CD8-positive, alpha-beta memory T cell (primary cell): ENCODE measurements at regions of chr7 and their contacts with region 1.

Region 1: GRCh38 chr7:134646425-134647305 is at the start of gene BPGM:
- DNase-seq: peak; percentile 93 to 99 (median 98)
- H3K4me3 ChIP-seq: peak within 1 kb of the TSS; percentile 81
- H3K4me3 Mint-ChIP-seq: no peak within 1 kb of the TSS
- H3K27ac ChIP-seq: peak within 1 kb of the TSS; percentile 87
- H3K27ac Mint-ChIP-seq: no peak within 1 kb of the TSS
- H3K4me1 ChIP-seq: peaks cover 19% of the 10 kb centered on the region
- H3K4me1 Mint-ChIP-seq: peaks cover 20 to 35% (median 28%) of the 10 kb centered on the region in 3 donors
- H3K27me3 ChIP-seq: no peaks in the 10 kb centered on the region
- H3K27me3 Mint-ChIP-seq: no peaks in the 10 kb centered on the region
- total RNA-seq, gene BPGM: 25.4 to 27.1 TPM

Region 2: GRCh38 chr7:134593530-134594392 is 52.9 kb before region 1 on chr7:
- CTCF ChIA-PET with region 1: no interaction called
- POLR2A ChIA-PET with region 1: no interaction called
- DNase-seq: no peak
- H3K4me3 ChIP-seq: no peak overlapping the region
- H3K4me3 Mint-ChIP-seq: no peak overlapping the region
- H3K27ac ChIP-seq: no peak overlapping the region
- H3K27ac Mint-ChIP-seq: no peak overlapping the region
- H3K4me1 ChIP-seq: no peaks in the 10 kb centered on the region
- H3K4me1 Mint-ChIP-seq: no peaks in the 10 kb centered on the region
- H3K27me3 ChIP-seq: no peaks in the 10 kb centered on the region
- H3K27me3 Mint-ChIP-seq: peaks cover 9 to 15% of the 10 kb centered on the region in 2 donors

Region 3: GRCh38 chr7:134632937-134633540 is 13.6 kb before region 1 on chr7:
- CTCF ChIA-PET with region 1: interaction called, 55 read pairs
- POLR2A ChIA-PET with region 1: interaction called, 7 read pairs
- DNase-seq: peak in 4 of 5 donors; percentile 8 to 63 (median 51)
- H3K4me3 ChIP-seq: no peak overlapping the region
- H3K4me3 Mint-ChIP-seq: no peak overlapping the region
- H3K27ac ChIP-seq: no peak overlapping the region
- H3K27ac Mint-ChIP-seq: no peak overlapping the region
- H3K4me1 ChIP-seq: peaks cover 8% of the 10 kb centered on the region
- H3K4me1 Mint-ChIP-seq: peaks cover 11 to 21% (median 19%) of the 10 kb centered on the region in 3 donors
- H3K27me3 ChIP-seq: no peaks in the 10 kb centered on the region
- H3K27me3 Mint-ChIP-seq: peaks cover 13 to 32% of the 10 kb centered on the region in 2 donors

Region 4: GRCh38 chr7:134660242-134660785 is 13.6 kb after region 1 on chr7:
- CTCF ChIA-PET with region 1: interaction called, 11 read pairs
- POLR2A ChIA-PET with region 1: interaction called, 4 read pairs
- DNase-seq: no peak
- H3K4me3 ChIP-seq: no peak overlapping the region
- H3K4me3 Mint-ChIP-seq: no peak overlapping the region
- H3K27ac ChIP-seq: no peak overlapping the region
- H3K27ac Mint-ChIP-seq: no peak overlapping the region
- H3K4me1 ChIP-seq: no peaks in the 10 kb centered on the region
- H3K4me1 Mint-ChIP-seq: peaks cover 25 to 51% (median 25%) of the 10 kb centered on the region in 3 donors
- H3K27me3 ChIP-seq: no peaks in the 10 kb centered on the region
- H3K27me3 Mint-ChIP-seq: no peaks in the 10 kb centered on the region

Region 5: GRCh38 chr7:134669845-134670373 is 23.2 kb after region 1 on chr7:
- CTCF ChIA-PET with region 1: interaction called, 10 read pairs
- POLR2A ChIA-PET with region 1: interaction called, 7 read pairs
- DNase-seq: peak; percentile 72 to 93 (median 82)
- H3K4me3 ChIP-seq: no peak overlapping the region
- H3K4me3 Mint-ChIP-seq: peak overlapping the region in 6 of 7 donors; percentile 19 to 83 (median 72)
- H3K27ac ChIP-seq: no peak overlapping the region
- H3K27ac Mint-ChIP-seq: peak overlapping the region; percentile 81 to 100 (median 97)
- H3K4me1 ChIP-seq: peaks cover 26% of the 10 kb centered on the region
- H3K4me1 Mint-ChIP-seq: peaks cover 34 to 48% (median 46%) of the 10 kb centered on the region in 3 donors
- H3K27me3 ChIP-seq: no peaks in the 10 kb centered on the region
- H3K27me3 Mint-ChIP-seq: no peaks in the 10 kb centered on the region

Region 6: GRCh38 chr7:134701272-134701671 is 54.6 kb after region 1 on chr7:
- CTCF ChIA-PET with region 1: interaction called, 13 read pairs
- POLR2A ChIA-PET with region 1: interaction called, 5 read pairs
- DNase-seq: peak in 3 of 5 donors; percentile 13 to 51 (median 42)
- H3K4me3 ChIP-seq: no peak overlapping the region
- H3K4me3 Mint-ChIP-seq: no peak overlapping the region
- H3K27ac ChIP-seq: no peak overlapping the region
- H3K27ac Mint-ChIP-seq: peak overlapping the region in 2 of 8 donors; percentile 8 to 61
- H3K4me1 ChIP-seq: no peaks in the 10 kb centered on the region
- H3K4me1 Mint-ChIP-seq: no peaks in the 10 kb centered on the region
- H3K27me3 ChIP-seq: no peaks in the 10 kb centered on the region
- H3K27me3 Mint-ChIP-seq: peaks cover 0 to 16% of the 10 kb centered on the region in 2 donors

Region 7: GRCh38 chr7:134831862-134832261 is 185.2 kb after region 1 on chr7:
- CTCF ChIA-PET with region 1: no interaction called
- POLR2A ChIA-PET with region 1: no interaction called
- DNase-seq: no peak
- H3K4me3 ChIP-seq: no peak overlapping the region
- H3K4me3 Mint-ChIP-seq: peak overlapping the region in 1 of 7 donors; percentile 32
- H3K27ac ChIP-seq: no peak overlapping the region
- H3K27ac Mint-ChIP-seq: no peak overlapping the region
- H3K4me1 ChIP-seq: no peaks in the 10 kb centered on the region
- H3K4me1 Mint-ChIP-seq: no peaks in the 10 kb centered on the region
- H3K27me3 ChIP-seq: no peaks in the 10 kb centered on the region
- H3K27me3 Mint-ChIP-seq: peaks cover 3% of the 10 kb centered on the region in 2 donors

Region 8: DNA sequence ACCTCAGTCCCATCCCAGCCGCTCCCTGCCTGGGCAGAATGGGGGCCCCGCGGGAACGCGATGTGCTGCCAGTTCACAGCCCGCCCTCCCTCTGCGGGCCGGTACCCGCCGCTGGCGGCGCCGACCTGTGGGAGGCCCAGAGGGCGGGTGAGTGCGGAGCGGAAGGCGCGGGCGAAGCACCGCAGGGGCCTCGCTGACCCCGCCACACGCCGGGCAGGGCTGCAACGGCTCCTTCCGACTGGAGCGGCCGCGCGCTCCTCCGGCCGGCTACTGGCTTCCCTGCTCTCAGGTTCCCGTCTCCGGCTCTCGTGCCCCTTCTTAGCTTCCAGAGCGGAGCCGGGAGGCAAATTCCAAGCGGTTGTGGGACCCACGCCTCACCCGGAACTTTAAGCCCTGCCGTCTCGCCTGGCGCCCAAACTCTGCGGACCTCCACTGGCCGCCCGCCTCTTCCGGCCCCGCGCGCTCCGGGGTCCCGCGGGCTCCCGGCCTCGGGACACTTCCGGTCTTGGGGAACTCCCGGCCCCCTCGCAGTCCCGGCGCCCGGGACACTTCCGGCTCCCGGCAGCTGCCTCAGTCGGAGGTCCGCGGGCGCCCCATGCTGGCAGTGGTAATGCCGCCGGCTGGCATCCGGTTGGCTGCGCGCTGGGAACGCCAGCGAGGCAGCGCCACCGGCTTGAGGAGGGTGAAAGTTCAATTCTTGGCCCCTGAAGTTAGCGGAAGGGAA is 523.8 kb after region 1 on chr7 and contains the start of gene CYREN:
- CTCF ChIA-PET with region 1: interaction called, 14 read pairs
- POLR2A ChIA-PET with region 1: interaction called, 4 read pairs
- DNase-seq: peak; percentile 81 to 92 (median 85)
- H3K4me3 ChIP-seq: peak within 1 kb of the TSS; percentile 64
- H3K4me3 Mint-ChIP-seq: peak within 1 kb of the TSS; percentile 86 to 97 (median 89)
- H3K27ac ChIP-seq: peak within 1 kb of the TSS; percentile 92
- H3K27ac Mint-ChIP-seq: peak within 1 kb of the TSS; percentile 93 to 99 (median 96)
- H3K4me1 ChIP-seq: peaks cover 17% of the 10 kb centered on the region
- H3K4me1 Mint-ChIP-seq: peaks cover 39 to 57% (median 54%) of the 10 kb centered on the region in 3 donors
- H3K27me3 ChIP-seq: no peaks in the 10 kb centered on the region
- H3K27me3 Mint-ChIP-seq: no peaks in the 10 kb centered on the region
- total RNA-seq, gene CYREN: 77.2 to 79.9 TPM